Transverse colon (tissue), 4 donors: ENCODE measurements at regions of chr5 and their contacts with region 1.

Region 1: DNA sequence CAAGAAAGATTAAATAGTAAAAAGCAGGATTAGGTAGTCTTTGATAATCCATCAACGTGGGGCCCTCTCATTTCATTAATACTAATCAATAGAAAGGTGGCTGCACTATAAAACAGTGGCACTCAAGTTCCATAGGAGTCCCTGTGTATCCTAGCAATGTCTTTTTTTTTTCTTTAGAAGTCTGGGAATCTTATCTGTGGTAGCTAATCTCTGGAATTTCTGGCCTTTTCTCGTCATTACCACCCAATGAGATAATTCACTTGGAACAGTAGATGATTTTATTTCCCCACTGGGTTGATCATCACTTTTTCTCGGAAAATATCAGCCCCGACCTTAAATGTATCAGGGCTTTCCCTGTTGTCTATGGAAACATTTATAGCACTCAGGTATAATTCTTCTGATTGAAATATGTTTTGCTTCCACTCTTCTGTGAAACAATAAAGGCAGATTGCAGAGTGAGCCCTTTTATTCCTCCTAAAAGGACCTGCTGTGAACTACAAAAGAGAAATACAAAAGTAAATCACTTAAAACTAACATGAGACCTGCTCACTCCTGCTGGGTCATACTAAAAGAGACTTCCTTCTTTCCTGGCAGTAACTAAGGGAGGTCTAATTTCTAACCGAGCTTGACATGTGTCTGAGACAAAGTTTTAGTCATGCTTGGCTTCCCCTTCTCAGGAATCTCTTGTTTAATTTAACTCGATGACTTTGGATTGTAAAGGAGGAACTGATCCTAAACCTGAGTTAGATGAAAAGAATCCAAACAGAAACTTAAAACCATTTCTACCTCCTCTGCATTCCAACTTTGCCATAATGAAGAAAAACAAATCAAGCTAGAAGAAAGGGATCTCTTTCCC is 86.6 kb upstream of the CDH6 start:
- DNase-seq: no peak
- H3K4me3 ChIP-seq: no peak overlapping the region
- H3K27ac ChIP-seq: no peak overlapping the region
- H3K4me1 ChIP-seq: no peaks in the 10 kb centered on the region
- H3K27me3 ChIP-seq: no peaks in the 10 kb centered on the region
- CTCF ChIP-seq: no peak
- EP300 ChIP-seq: no peak
- POLR2A ChIP-seq: no peak

Region 2: DNA sequence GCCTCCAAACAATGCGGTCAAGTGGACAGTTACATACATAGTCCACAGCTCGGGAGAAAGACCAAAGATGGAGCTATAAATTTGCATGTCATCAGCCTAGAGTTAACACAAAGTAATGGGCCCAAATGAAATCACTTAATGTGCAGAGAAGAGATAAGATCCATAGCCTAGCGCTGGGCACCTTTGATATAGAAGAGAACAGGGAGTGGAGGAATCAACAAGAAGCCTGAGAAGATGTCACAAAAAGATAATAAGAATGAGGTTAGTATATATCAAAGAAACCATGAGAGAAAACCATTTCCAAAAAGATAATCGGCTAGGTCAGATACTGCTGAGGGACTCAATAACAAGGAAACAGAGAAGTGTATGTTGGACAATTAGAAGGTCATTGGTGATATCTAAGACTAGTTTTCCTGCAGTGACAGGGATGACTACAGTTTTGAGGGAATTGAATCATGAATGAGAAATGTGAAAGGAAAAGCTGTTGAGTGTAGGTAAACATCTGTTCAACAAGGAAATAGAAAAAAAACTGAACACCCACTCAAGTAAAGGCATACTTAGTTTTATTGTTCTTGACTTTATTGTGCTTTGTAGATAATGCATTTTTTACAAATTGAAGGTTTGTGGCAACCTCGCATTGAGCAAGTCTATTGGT is 17.9 kb after region 1 on chr5:
- in situ Hi-C with region 1: no loop called
- intact Hi-C with region 1: loop called (anchors 1 kb)
- DNase-seq: no peak
- H3K4me3 ChIP-seq: no peak overlapping the region
- H3K27ac ChIP-seq: no peak overlapping the region
- H3K4me1 ChIP-seq: no peaks in the 10 kb centered on the region
- H3K27me3 ChIP-seq: no peaks in the 10 kb centered on the region
- CTCF ChIP-seq: no peak
- EP300 ChIP-seq: no peak
- POLR2A ChIP-seq: no peak

Region 3: GRCh38 chr5:31193591-31194467 is 86.9 kb after region 1 on chr5 and contains the start of gene CDH6:
- in situ Hi-C with region 1: no loop called
- intact Hi-C with region 1: no loop called
- DNase-seq: peak; percentile 9
- H3K4me3 ChIP-seq: peak within 1 kb of the TSS in 3 of 4 donors; percentile 14 to 47 (median 32)
- H3K27ac ChIP-seq: peak within 1 kb of the TSS in 1 of 4 donors; percentile 29
- H3K4me1 ChIP-seq: peaks cover 4 to 26% (median 13%) of the 10 kb centered on the region in 4 donors
- H3K27me3 ChIP-seq: peaks cover 62% of the 10 kb centered on the region
- CTCF ChIP-seq: no peak
- EP300 ChIP-seq: no peak
- POLR2A ChIP-seq: no peak
- total RNA-seq, gene CDH6: 0.60 to 1.2 (median 0.93) TPM